ENCODE measurements at regions of chr1 and their contacts with region 1.

Region 1: DNA sequence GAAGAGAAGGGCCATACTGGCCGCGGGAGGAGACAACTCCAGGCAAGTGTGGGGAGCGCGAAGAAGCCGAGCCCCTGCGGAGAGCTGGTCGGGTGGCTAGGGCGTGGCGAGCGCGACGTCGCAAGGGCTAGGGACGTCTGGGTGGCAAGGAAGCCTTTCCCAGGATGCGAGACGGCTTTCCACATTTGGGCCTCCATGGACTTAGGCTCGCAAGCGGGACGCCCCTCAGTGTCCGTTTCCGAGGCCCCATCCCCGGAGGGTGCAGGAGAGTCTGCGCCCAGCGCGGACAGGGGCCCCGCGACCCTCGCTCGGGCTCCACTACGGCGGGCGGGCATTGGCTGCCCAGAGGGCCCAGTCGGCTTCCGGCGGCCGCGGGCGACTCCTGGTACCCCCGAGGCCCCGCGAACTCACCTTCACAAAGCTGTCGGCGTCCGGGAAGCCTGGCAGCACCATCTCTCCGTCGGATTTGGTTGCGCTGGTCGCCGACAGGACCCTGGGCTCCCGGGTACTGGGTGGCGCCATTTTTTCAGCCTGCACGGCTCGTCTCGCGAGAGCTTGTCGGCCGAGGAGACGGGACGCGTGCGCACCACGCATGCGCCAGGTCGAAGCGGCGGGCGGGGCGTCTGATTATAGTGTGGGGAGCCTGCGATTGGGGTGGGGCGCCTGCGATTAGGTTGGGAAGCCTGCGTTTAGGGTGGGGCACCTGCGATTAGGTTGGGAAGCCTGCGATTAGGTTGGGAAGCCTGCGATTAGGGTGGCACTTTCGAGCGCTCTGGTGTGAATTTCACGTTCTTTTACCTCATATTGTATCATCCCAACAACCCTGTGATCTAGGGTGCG is at the start of gene EXOSC10:
- DNase-seq: peak; percentile 66
- ATAC-seq: peak; percentile 98
- H3K4me3 ChIP-seq: peak within 1 kb of the TSS; percentile 92
- H3K27ac ChIP-seq: peak within 1 kb of the TSS; percentile 88
- H3K4me1 ChIP-seq: peaks cover 4% of the 10 kb centered on the region; the same call in 1 of the 2 replicates
- H3K27me3 ChIP-seq: no peaks in the 10 kb centered on the region
- CTCF ChIP-seq: no peak
- EP300 ChIP-seq: no peak
- POLR2A ChIP-seq: peak; percentile 87
- RAD21 ChIP-seq: no peak
- polyA plus RNA-seq, gene EXOSC10: 16.2 to 16.7 TPM

Region 2: DNA sequence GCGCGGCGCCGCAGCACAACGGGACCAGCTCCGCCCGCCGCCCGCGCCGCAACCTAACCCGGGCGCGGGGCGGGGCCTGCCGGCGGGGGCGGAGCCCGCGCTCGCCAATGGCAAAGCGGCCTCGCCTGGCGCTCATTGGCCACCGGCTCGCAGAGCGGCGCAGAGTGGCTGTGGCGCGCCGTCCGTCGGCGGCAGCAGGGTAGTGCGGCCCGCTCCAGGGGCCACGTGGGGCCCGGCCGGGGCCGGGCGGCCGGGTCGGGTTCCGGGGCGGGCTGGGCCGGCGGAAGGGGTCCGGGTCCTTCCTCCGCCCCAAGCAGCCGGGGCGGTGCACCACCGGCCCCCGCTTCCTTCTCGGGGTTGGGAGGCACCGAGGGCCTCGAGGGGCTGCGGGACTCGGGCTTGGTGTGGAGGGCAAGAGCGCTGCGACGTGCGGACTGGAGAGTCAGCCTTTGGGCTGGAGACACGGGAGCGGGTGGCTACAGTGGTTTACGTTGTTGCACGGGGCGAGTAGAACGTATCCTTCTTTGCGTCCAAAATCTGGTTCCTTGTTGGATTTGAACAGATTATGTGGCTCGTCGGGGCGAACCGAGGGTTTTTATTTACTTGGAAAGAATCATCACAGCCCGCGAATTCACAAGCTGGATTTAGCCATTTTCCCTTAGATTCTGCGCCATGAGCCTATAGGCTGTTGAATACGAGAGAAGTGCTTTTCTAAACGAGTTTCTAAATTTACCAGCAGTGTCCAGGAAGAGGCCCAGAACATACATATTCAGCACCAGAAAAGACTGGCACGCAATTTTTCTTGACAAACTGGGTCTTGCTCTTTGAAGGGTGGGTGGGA is 39.3 kb before region 1 on chr1 and contains the start of gene SRM:
- CTCF ChIA-PET with region 1: interaction called, 3 read pairs
- POLR2A ChIA-PET with region 1: interaction called, 3 read pairs
- RAD21 ChIA-PET with region 1: interaction called, 3 read pairs
- SMC1A ChIA-PET with region 1: interaction called, 5 read pairs
- in situ Hi-C with region 1: no loop called
- intact Hi-C with region 1: loop called (anchors 1 kb)
- DNase-seq: peak; percentile 40
- ATAC-seq: peak; percentile 94
- H3K4me3 ChIP-seq: peak within 1 kb of the TSS; percentile 95
- H3K27ac ChIP-seq: peak within 1 kb of the TSS; percentile 85
- H3K4me1 ChIP-seq: peaks cover 26% of the 10 kb centered on the region
- H3K27me3 ChIP-seq: no peaks in the 10 kb centered on the region
- CTCF ChIP-seq: peak in 2 of 3 experiments; percentile 13 to 41; a peak in 1 of 6 replicates
- EP300 ChIP-seq: no peak
- POLR2A ChIP-seq: peak; percentile 82
- RAD21 ChIP-seq: no peak
- polyA plus RNA-seq, gene SRM: 16.7 to 46.6 TPM

Region 3: GRCh38 chr1:11072216-11072917 is 27.2 kb before region 1 on chr1:
- CTCF ChIA-PET with region 1: interaction called, 4 read pairs
- POLR2A ChIA-PET with region 1: no interaction called
- RAD21 ChIA-PET with region 1: no interaction called
- SMC1A ChIA-PET with region 1: interaction called, 11 read pairs
- in situ Hi-C with region 1: no loop called
- intact Hi-C with region 1: no loop called
- DNase-seq: no peak
- ATAC-seq: peak; percentile 83
- H3K4me3 ChIP-seq: no peak overlapping the region
- H3K27ac ChIP-seq: peak overlapping the region; percentile 62
- H3K4me1 ChIP-seq: peaks cover 13% of the 10 kb centered on the region
- H3K27me3 ChIP-seq: no peaks in the 10 kb centered on the region
- CTCF ChIP-seq: peak; percentile 43 to 53 (median 44); a peak in 5 of 6 replicates
- EP300 ChIP-seq: no peak
- POLR2A ChIP-seq: no peak
- RAD21 ChIP-seq: peak; percentile 64

Region 4: DNA sequence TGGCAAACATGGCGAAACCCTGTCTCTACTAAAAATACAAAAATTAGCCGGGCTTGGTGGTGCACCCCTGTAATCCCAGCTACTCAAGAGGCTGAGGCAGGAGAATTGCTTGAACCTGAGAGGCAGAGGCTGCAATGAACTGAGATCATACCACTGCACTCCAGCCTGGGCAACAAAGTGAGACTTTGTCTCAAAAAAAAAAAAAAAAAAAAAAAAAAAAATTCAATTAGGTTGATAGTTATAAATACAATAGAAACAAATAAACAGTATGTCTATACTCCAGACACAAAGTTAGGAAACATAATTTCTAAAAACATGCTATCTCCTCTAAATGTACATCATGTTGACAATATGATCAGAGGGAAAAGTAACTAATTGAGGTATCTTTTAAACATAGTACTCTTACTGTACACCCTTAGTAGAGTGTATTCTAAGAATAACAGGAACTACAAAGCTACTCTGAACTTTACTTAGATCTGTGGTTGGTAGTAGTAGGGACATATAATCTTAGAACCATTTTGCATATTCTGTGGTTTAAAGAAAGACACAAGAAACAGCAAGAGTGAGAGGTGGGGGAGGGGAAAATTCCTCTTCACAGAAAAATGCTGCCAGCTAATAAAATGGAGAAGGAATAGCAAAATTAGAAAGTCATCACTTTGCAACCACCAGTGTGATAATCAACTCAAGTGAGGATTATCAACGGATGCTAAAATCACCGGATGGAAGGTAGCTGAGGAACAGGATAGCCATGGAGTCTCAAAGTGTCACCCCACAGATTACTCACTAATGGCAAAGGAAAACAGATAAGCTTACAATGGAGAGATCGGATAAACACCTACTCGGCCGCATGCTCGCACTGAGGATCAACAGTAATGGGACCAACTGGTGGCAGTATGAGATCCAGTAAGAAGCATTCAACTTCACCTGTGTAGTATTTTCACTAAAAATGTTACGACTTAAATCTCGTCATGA is 127.9 kb after region 1 on chr1:
- CTCF ChIA-PET with region 1: no interaction called
- POLR2A ChIA-PET with region 1: interaction called, 10 read pairs
- RAD21 ChIA-PET with region 1: no interaction called
- SMC1A ChIA-PET with region 1: no interaction called
- in situ Hi-C with region 1: no loop called
- intact Hi-C with region 1: no loop called
- DNase-seq: peak; percentile 34
- ATAC-seq: peak; percentile 81
- H3K4me3 ChIP-seq: peak overlapping the region; percentile 9; the same call in 1 of the 2 replicates
- H3K27ac ChIP-seq: peak overlapping the region; percentile 50
- H3K4me1 ChIP-seq: peaks cover 27% of the 10 kb centered on the region
- H3K27me3 ChIP-seq: no peaks in the 10 kb centered on the region
- CTCF ChIP-seq: no peak
- EP300 ChIP-seq: no peak
- POLR2A ChIP-seq: no peak
- RAD21 ChIP-seq: no peak